Left ventricle myocardium inferior (tissue), 1 donor: ENCODE measurements at regions of chr1 and their contacts with region 1.

Region 1: DNA sequence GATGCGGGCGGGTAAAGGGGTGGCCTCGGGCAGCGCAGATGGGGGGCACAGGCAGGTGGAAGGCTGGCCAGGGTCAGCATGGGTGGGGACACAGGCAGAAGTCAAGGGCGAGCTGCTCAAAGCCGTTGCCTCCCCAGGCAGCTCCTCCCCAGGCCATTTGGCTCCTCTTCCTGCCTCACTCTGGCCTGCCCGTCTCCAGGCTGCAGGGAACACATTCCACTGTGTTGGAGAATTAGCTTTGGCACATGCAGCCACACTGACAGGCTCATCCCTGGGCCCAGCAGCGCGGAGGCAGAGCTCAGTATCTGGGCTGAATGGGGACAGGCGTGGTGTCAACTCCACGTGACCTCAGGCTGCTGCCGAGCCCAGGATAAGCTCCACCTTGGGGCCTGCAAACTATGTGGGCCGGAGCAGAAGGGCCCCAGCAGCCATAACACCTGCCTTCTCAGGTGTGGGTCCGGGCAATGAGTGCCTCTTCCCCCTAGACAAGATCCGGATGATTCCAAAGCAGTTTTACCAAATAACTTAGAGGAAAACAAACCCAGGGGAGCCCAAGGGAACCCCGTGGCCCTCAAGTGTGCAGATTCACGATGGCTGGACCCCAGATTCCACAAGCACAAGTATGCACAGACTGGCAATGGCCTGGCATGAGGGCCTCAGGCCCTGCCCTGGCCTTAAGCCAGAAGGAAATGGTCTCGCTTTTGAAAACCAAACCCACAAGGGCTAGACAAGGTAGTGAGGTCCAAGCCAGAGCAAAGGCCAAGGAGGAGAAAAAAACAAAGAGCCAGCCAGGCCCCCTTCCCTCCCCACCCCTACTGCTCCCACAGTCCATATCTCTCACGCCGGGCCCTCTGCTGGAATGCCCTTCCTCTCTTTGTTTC is 40.2 kb downstream of the HSPG2 start:
- DNase-seq: peak; percentile 88
- H3K4me3 ChIP-seq: peak overlapping the region; percentile 7
- H3K27ac ChIP-seq: peak overlapping the region; percentile 90
- H3K4me1 ChIP-seq: peaks cover 92% of the 10 kb centered on the region
- H3K27me3 ChIP-seq: no peaks in the 10 kb centered on the region
- CTCF ChIP-seq: no peak

Region 2: GRCh38 chr1:21811875-21812305 is 85.0 kb before region 1 on chr1 and contains the start of gene LDLRAD2:
- intact Hi-C with region 1: no loop called
- DNase-seq: no peak
- H3K4me3 ChIP-seq: no peak within 1 kb of the TSS
- H3K27ac ChIP-seq: no peak within 1 kb of the TSS
- H3K4me1 ChIP-seq: peaks cover 8% of the 10 kb centered on the region
- H3K27me3 ChIP-seq: peaks cover 4% of the 10 kb centered on the region
- CTCF ChIP-seq: no peak
- total RNA-seq, gene LDLRAD2: not detected

Region 3: DNA sequence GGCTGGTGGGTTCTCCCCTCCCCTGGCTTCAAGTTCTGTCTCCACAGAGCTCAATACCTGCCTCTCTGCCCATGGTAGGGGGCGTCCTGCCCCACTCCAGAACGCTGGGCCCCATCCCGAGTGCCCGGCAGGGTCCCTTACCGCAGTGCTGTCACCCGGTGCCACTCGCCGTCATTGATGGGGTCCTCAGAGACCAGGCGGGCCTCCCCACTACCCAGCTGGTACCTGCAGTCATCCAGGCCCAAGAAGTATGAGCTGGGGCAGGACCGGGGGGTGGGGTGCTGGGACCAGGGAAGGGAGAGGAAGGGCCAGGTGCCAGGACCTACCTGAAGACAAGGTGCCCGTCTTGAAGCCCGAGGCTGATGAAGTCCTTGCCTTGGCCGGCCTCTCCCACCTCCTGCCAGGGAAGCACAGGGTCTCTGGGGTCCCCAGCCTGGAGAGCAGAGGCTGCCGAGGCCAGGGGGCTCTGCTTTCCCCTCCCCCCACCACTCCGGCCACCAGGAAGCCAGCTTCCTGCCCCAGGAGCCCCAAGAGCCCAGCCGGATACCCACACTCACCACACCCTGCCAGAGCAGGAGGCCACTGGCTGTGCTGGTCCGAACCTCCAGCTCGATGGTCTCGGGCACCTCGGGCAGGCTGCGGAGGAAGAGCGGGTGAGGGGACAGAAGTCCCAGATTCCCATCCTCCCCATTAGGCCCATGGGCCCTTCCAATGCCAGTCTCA is 72.8 kb before region 1 on chr1:
- intact Hi-C with region 1: no loop called
- DNase-seq: no peak
- H3K4me3 ChIP-seq: no peak overlapping the region
- H3K27ac ChIP-seq: peak overlapping the region; percentile 42
- H3K4me1 ChIP-seq: peaks cover 12% of the 10 kb centered on the region
- H3K27me3 ChIP-seq: no peaks in the 10 kb centered on the region
- CTCF ChIP-seq: no peak

Region 4: GRCh38 chr1:21931171-21932093 is 34.5 kb after region 1 on chr1:
- intact Hi-C with region 1: loop called (anchors 5 kb)
- DNase-seq: peak; percentile 78
- H3K4me3 ChIP-seq: peak overlapping the region; percentile 75
- H3K27ac ChIP-seq: peak overlapping the region; percentile 90
- H3K4me1 ChIP-seq: peaks cover 100% of the 10 kb centered on the region
- H3K27me3 ChIP-seq: no peaks in the 10 kb centered on the region
- CTCF ChIP-seq: no peak

Region 5: GRCh38 chr1:21956720-21957552 is 60.0 kb after region 1 on chr1:
- intact Hi-C with region 1: loop called (anchors 10 kb)
- DNase-seq: peak; percentile 69
- H3K4me3 ChIP-seq: no peak overlapping the region
- H3K27ac ChIP-seq: peak overlapping the region; percentile 86
- H3K4me1 ChIP-seq: peaks cover 57% of the 10 kb centered on the region
- H3K27me3 ChIP-seq: no peaks in the 10 kb centered on the region
- CTCF ChIP-seq: no peak